Mammary epithelial cell (primary cell): ENCODE measurements at regions of chr5 and their contacts with region 1.

Region 1: DNA sequence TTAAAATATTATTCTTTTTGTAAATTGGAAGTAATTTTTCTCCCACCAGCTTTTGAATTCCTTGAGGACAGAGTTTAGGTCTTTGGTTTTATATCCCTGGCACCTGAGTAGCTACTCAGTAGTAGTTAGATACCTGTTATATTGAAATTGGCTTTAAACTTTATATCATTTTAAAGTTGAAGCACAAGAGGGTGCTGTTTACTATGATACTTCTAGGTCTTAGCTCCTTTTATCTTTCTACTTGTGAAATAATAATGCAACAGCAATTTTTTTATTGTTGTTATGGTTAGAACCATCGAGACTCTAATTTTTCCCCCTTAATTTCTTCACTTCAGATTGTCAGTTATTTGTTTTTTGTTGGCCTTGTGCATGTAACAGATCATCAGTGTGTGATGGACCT is 46.3 kb downstream of the AP3S1 start:
- DNase-seq: no peak
- H3K4me3 ChIP-seq: no peak overlapping the region
- H3K27ac ChIP-seq: no peak overlapping the region
- H3K4me1 ChIP-seq: no peaks in the 10 kb centered on the region
- H3K27me3 ChIP-seq: no peaks in the 10 kb centered on the region
- CTCF ChIP-seq: peak in 1 of 2 donors; percentile 9

Region 2: DNA sequence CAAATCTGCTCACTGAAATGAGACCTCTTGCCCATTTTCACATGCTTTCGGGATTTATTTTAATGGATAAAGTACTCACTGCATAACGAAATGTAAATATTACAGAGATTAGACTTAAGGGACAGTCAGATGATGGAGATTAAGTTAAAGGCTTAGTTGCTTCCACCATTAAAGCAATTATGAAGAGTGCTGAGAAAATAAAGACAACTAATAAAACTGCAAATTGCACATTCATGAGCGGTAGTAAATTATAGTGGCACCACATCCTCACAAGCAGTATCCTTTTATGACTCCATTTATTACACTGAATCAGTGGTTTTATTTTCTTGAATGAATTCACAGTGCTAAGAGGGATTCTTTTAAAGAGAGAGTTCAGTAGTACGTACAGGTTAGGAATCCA is 186.0 kb before region 1 on chr5:
- CTCF ChIA-PET with region 1: no interaction called
- dilution Hi-C with region 1: no loop called
- in situ Hi-C with region 1: no loop called
- intact Hi-C with region 1: no loop called
- DNase-seq: no peak
- H3K4me3 ChIP-seq: no peak overlapping the region
- H3K27ac ChIP-seq: no peak overlapping the region
- H3K4me1 ChIP-seq: no peaks in the 10 kb centered on the region
- H3K27me3 ChIP-seq: no peaks in the 10 kb centered on the region
- CTCF ChIP-seq: no peak

Region 3: GRCh38 chr5:116068028-116068632 is 180.1 kb after region 1 on chr5:
- CTCF ChIA-PET with region 1: interaction called, 4 read pairs
- dilution Hi-C with region 1: no loop called
- in situ Hi-C with region 1: loop called in 1 of 2 experiments (anchors 25 kb)
- intact Hi-C with region 1: loop called (anchors 2 kb)
- DNase-seq: peak; percentile 14
- H3K4me3 ChIP-seq: no peak overlapping the region
- H3K27ac ChIP-seq: no peak overlapping the region
- H3K4me1 ChIP-seq: no peaks in the 10 kb centered on the region
- H3K27me3 ChIP-seq: peaks cover 3% of the 10 kb centered on the region
- CTCF ChIP-seq: peak; percentile 71 to 77